ENCODE measurements at regions of chr1 and their contacts with region 1.

Region 1: GRCh38 chr1:207885129-207886032 is 25.5 kb downstream of the CD34 start:
- DNase-seq: peak; percentile 77 to 90 (median 84)
- ATAC-seq: peak; percentile 97
- H3K4me3 ChIP-seq: no peak overlapping the region
- H3K27ac ChIP-seq: peak overlapping the region in 1 of 2 donors; percentile 57
- H3K4me1 ChIP-seq: peaks cover 3 to 62% of the 10 kb centered on the region in 2 donors
- H3K27me3 ChIP-seq: no peaks in the 10 kb centered on the region
- CTCF ChIP-seq: peak; percentile 94 to 97

Region 2: GRCh38 chr1:207963427-207964194 is 78.2 kb after region 1 on chr1:
- intact Hi-C with region 1: loop called in 1 of 2 experiments (anchors 5 kb)
- DNase-seq: peak; percentile 89 to 99 (median 93)
- ATAC-seq: peak; percentile 95
- H3K4me3 ChIP-seq: peak overlapping the region; percentile 42 to 56
- H3K27ac ChIP-seq: peak overlapping the region; percentile 92 to 93
- H3K4me1 ChIP-seq: peaks cover 18 to 33% of the 10 kb centered on the region in 2 donors
- H3K27me3 ChIP-seq: peaks cover 0 to 20% of the 10 kb centered on the region in 2 donors
- CTCF ChIP-seq: peak; percentile 100